ENCODE measurements at regions of chr12 and their contacts with region 1.

Region 1: GRCh38 chr12:14946162-14946561 is 7.8 kb upstream of the ERP27 start:
- DNase-seq: no peak
- H3K4me3 ChIP-seq: no peak overlapping the region
- H3K27ac ChIP-seq: no peak overlapping the region
- H3K4me1 ChIP-seq: peaks cover 35% of the 10 kb centered on the region
- H3K27me3 ChIP-seq: no peaks in the 10 kb centered on the region
- CTCF ChIP-seq: no peak

Region 2: GRCh38 chr12:14868920-14869506 is 77.1 kb before region 1 on chr12:
- CTCF ChIA-PET with region 1: no interaction called
- POLR2A ChIA-PET with region 1: interaction called, 11 read pairs
- intact Hi-C with region 1: no loop called
- DNase-seq: peak; percentile 59 to 84
- H3K4me3 ChIP-seq: no peak overlapping the region
- H3K27ac ChIP-seq: peak overlapping the region; percentile 14; the same call in 1 of the 2 replicates
- H3K4me1 ChIP-seq: peaks cover 11% of the 10 kb centered on the region
- H3K27me3 ChIP-seq: no peaks in the 10 kb centered on the region
- CTCF ChIP-seq: no peak